ENCODE measurements at regions of chrX and their contacts with region 1.

Region 1: DNA sequence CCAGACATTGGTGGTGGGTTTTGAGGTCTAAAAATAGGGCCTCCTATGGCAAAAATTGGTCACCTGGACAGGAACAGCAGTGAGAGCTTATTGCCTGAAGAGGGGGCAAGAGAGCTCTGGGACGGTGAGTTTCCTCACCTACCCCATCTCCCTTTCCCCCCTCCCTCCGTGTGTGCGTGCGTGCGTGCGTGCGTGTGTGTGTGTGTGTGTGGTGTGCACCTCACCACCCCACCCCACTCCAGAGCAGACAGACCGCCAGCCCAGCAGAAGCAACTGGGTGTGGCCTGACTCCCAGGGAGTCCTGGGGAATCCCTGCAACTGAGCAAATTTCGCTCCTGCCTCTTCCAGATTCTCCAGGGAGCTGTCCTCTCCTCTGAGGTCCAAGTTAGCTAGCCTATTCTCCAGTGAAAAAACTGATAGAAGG is 44.7 kb downstream of the PRPS1 start:
- DNase-seq: peak; percentile 63
- H3K4me3 ChIP-seq: no peak overlapping the region
- H3K27ac ChIP-seq: no peak overlapping the region
- H3K4me1 ChIP-seq: peaks cover 26% of the 10 kb centered on the region
- H3K27me3 ChIP-seq: peaks cover 6% of the 10 kb centered on the region
- CTCF ChIP-seq: peak; percentile 70

Region 2: DNA sequence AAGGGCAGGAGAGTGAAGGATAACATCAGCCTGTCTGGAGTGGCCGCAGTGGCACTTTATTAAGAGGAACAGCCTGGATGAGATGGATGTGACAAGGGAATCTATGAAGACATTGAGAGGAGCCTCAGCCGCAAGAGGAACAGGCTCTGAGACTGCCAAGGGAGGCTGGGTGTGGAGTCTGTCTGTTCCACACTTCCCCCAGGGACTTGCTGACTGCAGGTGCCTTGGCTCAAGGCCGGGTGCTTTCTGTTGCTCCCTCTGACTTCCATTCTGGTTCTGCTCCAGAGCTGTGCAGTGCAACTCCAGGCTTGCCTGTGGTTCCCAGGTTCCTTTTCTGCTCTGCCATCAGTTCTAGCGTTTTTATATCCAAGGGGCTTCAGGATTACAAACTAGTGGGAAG is 169.0 kb before region 1 on chrX:
- CTCF ChIA-PET with region 1: interaction called, 25 read pairs
- POLR2A ChIA-PET with region 1: no interaction called
- intact Hi-C with region 1: no loop called
- DNase-seq: no peak
- H3K4me3 ChIP-seq: no peak overlapping the region
- H3K27ac ChIP-seq: no peak overlapping the region
- H3K4me1 ChIP-seq: no peaks in the 10 kb centered on the region
- H3K27me3 ChIP-seq: no peaks in the 10 kb centered on the region
- CTCF ChIP-seq: no peak

Region 3: DNA sequence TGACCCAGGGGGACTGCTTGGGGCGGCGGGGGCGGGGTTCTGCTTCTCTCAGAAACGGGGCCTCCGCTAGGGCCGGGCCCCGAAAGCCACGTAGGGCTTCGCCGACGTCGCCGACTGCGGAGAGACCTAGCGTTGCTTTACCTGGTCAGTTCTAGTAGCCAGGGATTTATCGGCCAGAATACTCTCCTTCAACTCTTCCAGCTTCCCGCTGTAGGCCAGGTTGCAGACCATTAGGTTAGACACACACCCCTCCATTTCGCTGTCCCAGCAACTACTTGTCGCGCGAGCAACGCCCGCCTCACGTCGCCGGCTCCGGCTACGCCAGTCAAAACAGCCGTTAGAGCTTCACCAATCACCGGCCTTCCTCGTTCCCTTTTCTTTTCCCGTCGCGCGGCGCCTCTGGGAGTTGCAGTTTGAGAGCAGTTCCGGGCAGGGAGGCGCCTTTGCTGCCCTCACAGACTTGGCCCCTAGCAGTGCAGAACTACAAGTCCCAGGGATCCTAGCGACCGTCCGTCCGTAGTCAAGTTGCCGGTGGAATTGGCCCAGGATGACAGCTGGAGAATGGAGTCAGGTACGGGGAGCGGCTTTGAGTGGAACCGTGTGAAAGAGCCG is 418.4 kb after region 1 on chrX and contains the starts of genes ATG4A and PSMD10:
- CTCF ChIA-PET with region 1: no interaction called
- POLR2A ChIA-PET with region 1: no interaction called
- intact Hi-C with region 1: no loop called
- DNase-seq: peak; percentile 96
- H3K4me3 ChIP-seq: peak within 1 kb of the TSS; percentile 64
- H3K27ac ChIP-seq: peak within 1 kb of the TSS; percentile 75
- H3K4me1 ChIP-seq: no peaks in the 10 kb centered on the region
- H3K27me3 ChIP-seq: no peaks in the 10 kb centered on the region
- CTCF ChIP-seq: no peak
- total RNA-seq, gene ATG4A: 3.8 and 4.8 TPM in 2 replicates
- total RNA-seq, gene PSMD10: 49.6 and 52.0 TPM in 2 replicates

Measured in A673 (cell line).